HCT116 (cell line): ENCODE measurements at regions of chr14 and their contacts with region 1.

Region 1: GRCh38 chr14:23286020-23286905 is at the start of gene HOMEZ:
- DNase-seq: peak; percentile 92
- ATAC-seq: peak; percentile 98
- H3K4me3 ChIP-seq: peak within 1 kb of the TSS; percentile 74 to 96
- H3K27ac ChIP-seq: peak within 1 kb of the TSS; percentile 77
- H3K4me1 ChIP-seq: peaks cover 10 to 14% of the 10 kb centered on the region in 2 experiments
- H3K27me3 ChIP-seq: no peaks in the 10 kb centered on the region
- CTCF ChIP-seq: no peak
- POLR2A ChIP-seq: peak; percentile 61
- RAD21 ChIP-seq: no peak
- total RNA-seq, gene HOMEZ: 18.2 TPM

Region 2: GRCh38 chr14:23301288-23301968 is 15.2 kb after region 1 on chr14:
- CTCF ChIA-PET with region 1: interaction called, 27 read pairs
- POLR2A ChIA-PET with region 1: interaction called, 6 read pairs
- RAD21 ChIA-PET with region 1: no interaction called
- intact Hi-C with region 1: no loop called
- DNase-seq: peak; percentile 95
- ATAC-seq: peak; percentile 84
- H3K4me3 ChIP-seq: peak overlapping the region; percentile 54 to 64
- H3K27ac ChIP-seq: peak overlapping the region; percentile 96
- H3K4me1 ChIP-seq: peaks cover 18 to 41% of the 10 kb centered on the region in 2 experiments
- H3K27me3 ChIP-seq: no peaks in the 10 kb centered on the region
- CTCF ChIP-seq: peak in 2 of 3 experiments; percentile 69 to 70; a peak in 4 of 6 replicates
- POLR2A ChIP-seq: peak; percentile 33
- RAD21 ChIP-seq: no peak

Region 3: DNA sequence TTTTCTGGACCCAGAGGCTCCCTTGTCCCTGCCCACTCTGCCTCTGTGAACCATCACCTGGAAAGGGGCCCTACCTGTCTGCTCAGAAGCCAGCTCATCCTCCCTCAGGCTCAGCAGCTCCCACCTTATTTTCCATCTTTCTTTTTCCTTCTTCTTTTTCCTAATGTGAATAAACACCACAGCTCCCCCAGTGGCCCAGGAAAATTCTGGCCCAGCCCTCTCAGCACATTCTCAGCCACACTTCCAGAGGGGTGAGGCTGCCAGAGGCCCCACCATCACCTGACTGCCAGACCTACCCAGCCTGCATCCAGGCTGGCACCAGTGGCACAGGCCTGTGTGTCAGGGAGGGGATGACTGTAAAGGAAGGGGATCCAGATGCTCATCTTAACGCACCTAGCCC is 242.3 kb after region 1 on chr14:
- CTCF ChIA-PET with region 1: no interaction called
- POLR2A ChIA-PET with region 1: no interaction called
- RAD21 ChIA-PET with region 1: no interaction called
- intact Hi-C with region 1: no loop called
- DNase-seq: no peak
- ATAC-seq: peak; percentile 80
- H3K4me3 ChIP-seq: no peak overlapping the region
- H3K27ac ChIP-seq: no peak overlapping the region
- H3K4me1 ChIP-seq: no peaks in the 10 kb centered on the region
- H3K27me3 ChIP-seq: no peaks in the 10 kb centered on the region
- CTCF ChIP-seq: peak in 2 of 3 experiments; percentile 28 to 47; a peak in 3 of 6 replicates
- POLR2A ChIP-seq: no peak
- RAD21 ChIP-seq: no peak

Region 4: DNA sequence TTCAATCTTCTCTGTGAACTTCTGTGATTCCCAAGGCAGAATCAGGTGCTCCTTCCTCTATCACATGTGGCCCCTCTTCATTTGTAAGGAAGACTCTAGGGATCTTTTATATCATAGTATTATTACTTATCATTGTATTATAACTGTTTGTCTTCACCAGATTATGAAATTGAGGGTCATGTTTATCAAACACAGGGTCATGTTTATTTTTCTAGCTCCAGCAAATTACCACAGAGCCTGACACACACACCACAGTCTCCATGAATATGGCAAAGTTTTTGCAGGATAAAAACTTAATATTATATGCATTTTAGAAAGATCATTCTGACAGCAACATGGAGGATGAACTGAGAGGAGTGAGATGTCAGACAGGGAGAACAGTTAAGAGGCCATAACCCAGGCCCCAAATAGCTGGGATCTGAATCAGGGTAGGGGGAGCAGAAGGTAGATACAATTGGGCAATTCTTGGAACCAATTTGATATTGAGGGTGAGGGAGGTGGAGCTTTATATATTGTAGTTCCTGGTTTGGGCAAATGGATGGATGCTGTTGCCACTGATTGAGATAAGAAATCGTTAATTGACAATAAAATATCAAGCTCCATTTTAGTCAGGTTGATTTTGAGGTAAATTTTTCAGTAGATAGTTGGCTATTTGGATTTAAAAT is 480.6 kb after region 1 on chr14:
- CTCF ChIA-PET with region 1: no interaction called
- POLR2A ChIA-PET with region 1: no interaction called
- RAD21 ChIA-PET with region 1: no interaction called
- intact Hi-C with region 1: no loop called
- DNase-seq: no peak
- ATAC-seq: no peak
- H3K4me3 ChIP-seq: no peak overlapping the region
- H3K27ac ChIP-seq: no peak overlapping the region
- H3K4me1 ChIP-seq: no peaks in the 10 kb centered on the region
- H3K27me3 ChIP-seq: no peaks in the 10 kb centered on the region
- CTCF ChIP-seq: no peak
- POLR2A ChIP-seq: no peak
- RAD21 ChIP-seq: no peak